ENCODE measurements at regions of chr5 and their contacts with region 1.

Region 1: GRCh38 chr5:171701100-171701541 is 84.5 kb upstream of the SMIM23 start:
- DNase-seq: peak in 1 of 2 donors; percentile 63
- H3K4me3 ChIP-seq: no peak overlapping the region
- CTCF ChIP-seq: no peak
- POLR2A ChIP-seq: no peak

Region 2: GRCh38 chr5:170338933-170339779 is 1362.0 kb before region 1 on chr5:
- intact Hi-C with region 1: loop called (anchors 5 kb)
- DNase-seq: peak in 1 of 2 donors; percentile 82
- H3K4me3 ChIP-seq: no peak overlapping the region
- CTCF ChIP-seq: no peak
- POLR2A ChIP-seq: no peak